ENCODE measurements at regions of chr19 and their contacts with region 1.

Region 1: DNA sequence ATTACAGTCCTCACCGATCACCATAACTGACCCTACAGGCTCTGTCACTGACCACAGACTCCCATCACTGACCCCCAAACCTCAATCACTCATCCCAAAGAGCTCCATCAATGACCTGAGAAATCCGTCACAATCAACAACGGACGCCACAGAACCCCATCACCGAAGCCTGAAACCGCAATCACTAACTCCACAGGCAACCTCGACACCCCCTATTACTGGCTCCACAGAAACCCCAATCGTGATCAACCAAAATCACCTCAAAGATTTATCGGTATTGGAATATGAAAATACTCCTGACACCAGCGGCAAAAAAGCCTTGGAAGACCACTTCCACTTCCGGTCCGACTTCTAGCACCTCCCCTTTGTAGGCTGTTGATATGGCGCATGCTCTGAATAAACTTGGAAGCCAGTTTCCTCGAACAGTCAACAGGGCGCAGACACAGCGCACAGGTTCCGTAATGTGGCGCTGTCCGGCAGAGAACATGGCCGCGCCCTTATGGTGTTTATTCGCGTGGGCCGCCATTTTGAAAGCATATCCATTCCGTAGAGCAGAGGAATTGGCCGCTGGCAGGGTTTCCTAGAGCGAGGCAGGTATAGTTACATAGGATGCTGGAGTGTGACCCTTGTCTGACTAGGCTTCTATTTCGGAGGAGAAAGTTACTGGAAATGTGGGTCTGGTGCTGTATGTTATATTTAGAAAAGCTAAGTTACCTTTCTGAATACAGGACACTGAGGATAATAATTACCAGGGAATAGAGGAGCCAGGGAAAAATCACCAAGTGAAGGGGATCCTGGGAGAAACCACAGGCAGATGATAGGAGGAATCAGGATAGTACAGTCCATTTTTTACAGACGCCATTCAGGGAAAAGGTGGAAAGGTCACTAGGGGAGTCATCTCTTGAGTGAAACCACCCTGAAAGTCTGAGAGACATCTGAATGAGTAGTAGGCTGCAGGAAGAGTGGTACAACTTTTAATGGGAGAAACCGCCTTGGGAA is at the start of gene ZNF585A:
- DNase-seq: peak; percentile 68 to 92 (median 88)
- ATAC-seq: peak; percentile 100
- H3K4me3 ChIP-seq: peak within 1 kb of the TSS; percentile 90
- H3K4me3 Mint-ChIP-seq: peak within 1 kb of the TSS in 3 of 10 donors; percentile 36 to 73 (median 39)
- H3K27ac ChIP-seq: peak within 1 kb of the TSS; percentile 84
- H3K27ac Mint-ChIP-seq: no peak within 1 kb of the TSS
- H3K4me1 ChIP-seq: no peaks in the 10 kb centered on the region
- H3K4me1 Mint-ChIP-seq: peaks cover 0 to 16% (median 4%) of the 10 kb centered on the region in 7 donors
- H3K27me3 ChIP-seq: no peaks in the 10 kb centered on the region
- H3K27me3 Mint-ChIP-seq: no peaks in the 10 kb centered on the region
- total RNA-seq, gene ZNF585A: 3.5 to 24.3 (median 7.2) TPM

Region 2: GRCh38 chr19:36489118-36489919 is 683.3 kb before region 1 on chr19 and contains the start of gene ZNF566:
- CTCF ChIA-PET with region 1: no interaction called
- POLR2A ChIA-PET with region 1: no interaction called
- intact Hi-C with region 1: loop called in 1 of 2 experiments (anchors 1 kb)
- DNase-seq: peak; percentile 74 to 98 (median 94)
- ATAC-seq: peak; percentile 95
- H3K4me3 ChIP-seq: peak within 1 kb of the TSS; percentile 97
- H3K4me3 Mint-ChIP-seq: peak within 1 kb of the TSS; percentile 93 to 99 (median 98)
- H3K27ac ChIP-seq: peak within 1 kb of the TSS; percentile 90
- H3K27ac Mint-ChIP-seq: peak within 1 kb of the TSS; percentile 93 to 99 (median 98)
- H3K4me1 ChIP-seq: peaks cover 9 to 10% of the 10 kb centered on the region in 2 donors
- H3K4me1 Mint-ChIP-seq: peaks cover 22 to 43% (median 30%) of the 10 kb centered on the region in 7 donors
- H3K27me3 ChIP-seq: no peaks in the 10 kb centered on the region
- H3K27me3 Mint-ChIP-seq: no peaks in the 10 kb centered on the region
- total RNA-seq, gene ZNF566: 9.2 to 29.8 (median 9.3) TPM

Region 3: DNA sequence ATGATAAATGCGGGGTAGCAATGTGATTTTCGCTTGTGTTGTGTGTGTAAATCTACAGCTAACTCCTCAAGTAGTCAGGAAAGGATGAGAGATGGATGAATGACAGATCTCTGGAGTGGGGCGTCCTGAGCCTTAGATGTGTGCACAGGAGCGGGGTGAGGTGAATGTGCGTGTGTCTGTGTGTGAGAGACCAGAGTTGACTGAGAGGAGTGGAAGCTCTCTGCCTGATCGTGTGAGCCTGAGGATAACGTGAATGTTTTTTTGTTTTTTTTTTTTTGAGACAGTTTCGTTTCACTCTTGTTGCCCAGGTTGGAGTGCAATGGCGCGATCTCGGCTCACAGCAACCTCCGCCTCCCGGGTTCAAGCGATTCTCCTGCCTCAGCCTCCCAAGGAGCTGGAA is 506.8 kb before region 1 on chr19:
- CTCF ChIA-PET with region 1: no interaction called
- POLR2A ChIA-PET with region 1: no interaction called
- intact Hi-C with region 1: loop called in 1 of 2 experiments (anchors 5 kb)
- DNase-seq: peak in 1 of 9 donors; percentile 2
- ATAC-seq: no peak
- H3K4me3 ChIP-seq: peak overlapping the region; percentile 88
- H3K4me3 Mint-ChIP-seq: peak overlapping the region; percentile 91 to 100 (median 98)
- H3K27ac ChIP-seq: no peak overlapping the region
- H3K27ac Mint-ChIP-seq: peak overlapping the region; percentile 29 to 99 (median 93)
- H3K4me1 ChIP-seq: peaks cover 0 to 10% of the 10 kb centered on the region in 2 donors
- H3K4me1 Mint-ChIP-seq: peaks cover 17 to 42% (median 35%) of the 10 kb centered on the region in 7 donors
- H3K27me3 ChIP-seq: no peaks in the 10 kb centered on the region
- H3K27me3 Mint-ChIP-seq: no peaks in the 10 kb centered on the region

Region 4: DNA sequence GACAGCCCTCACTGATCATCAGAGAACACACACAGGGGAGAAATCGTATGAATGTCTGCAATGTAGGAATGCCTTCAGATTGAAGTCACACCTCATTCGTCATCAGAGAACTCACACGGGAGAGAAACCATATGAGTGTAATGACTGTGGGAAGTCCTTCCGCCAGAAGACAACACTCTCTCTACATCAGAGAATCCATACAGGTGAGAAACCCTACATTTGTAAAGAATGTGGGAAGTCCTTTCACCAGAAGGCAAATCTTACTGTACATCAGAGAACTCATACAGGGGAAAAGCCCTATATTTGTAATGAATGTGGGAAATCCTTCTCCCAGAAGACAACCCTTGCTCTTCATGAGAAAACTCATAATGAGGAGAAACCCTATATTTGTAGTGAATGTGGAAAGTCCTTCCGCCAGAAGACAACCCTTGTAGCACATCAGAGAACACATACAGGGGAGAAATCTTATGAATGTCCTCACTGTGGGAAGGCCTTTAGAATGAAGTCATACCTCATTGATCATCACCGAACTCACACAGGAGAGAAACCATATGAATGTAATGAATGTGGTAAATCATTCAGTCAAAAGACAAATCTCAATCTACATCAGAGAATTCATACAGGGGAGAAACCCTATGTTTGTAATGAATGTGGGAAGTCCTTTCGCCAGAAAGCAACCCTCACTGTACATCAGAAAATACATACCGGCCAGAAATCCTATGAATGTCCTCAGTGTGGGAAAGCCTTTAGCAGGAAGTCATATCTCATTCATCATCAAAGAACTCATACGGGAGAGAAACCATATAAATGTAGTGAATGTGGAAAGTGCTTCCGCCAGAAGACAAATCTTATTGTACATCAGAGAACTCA is 452.7 kb before region 1 on chr19:
- CTCF ChIA-PET with region 1: no interaction called
- POLR2A ChIA-PET with region 1: no interaction called
- intact Hi-C with region 1: no loop called
- DNase-seq: peak in 1 of 9 donors; percentile 3
- ATAC-seq: no peak
- H3K4me3 ChIP-seq: peak overlapping the region; percentile 11
- H3K4me3 Mint-ChIP-seq: peak overlapping the region in 2 of 10 donors; percentile 4 to 11
- H3K27ac ChIP-seq: no peak overlapping the region
- H3K27ac Mint-ChIP-seq: peak overlapping the region in 1 of 9 donors; percentile 32
- H3K4me1 ChIP-seq: no peaks in the 10 kb centered on the region
- H3K4me1 Mint-ChIP-seq: no peaks in the 10 kb centered on the region
- H3K27me3 ChIP-seq: no peaks in the 10 kb centered on the region
- H3K27me3 Mint-ChIP-seq: no peaks in the 10 kb centered on the region

Region 5: DNA sequence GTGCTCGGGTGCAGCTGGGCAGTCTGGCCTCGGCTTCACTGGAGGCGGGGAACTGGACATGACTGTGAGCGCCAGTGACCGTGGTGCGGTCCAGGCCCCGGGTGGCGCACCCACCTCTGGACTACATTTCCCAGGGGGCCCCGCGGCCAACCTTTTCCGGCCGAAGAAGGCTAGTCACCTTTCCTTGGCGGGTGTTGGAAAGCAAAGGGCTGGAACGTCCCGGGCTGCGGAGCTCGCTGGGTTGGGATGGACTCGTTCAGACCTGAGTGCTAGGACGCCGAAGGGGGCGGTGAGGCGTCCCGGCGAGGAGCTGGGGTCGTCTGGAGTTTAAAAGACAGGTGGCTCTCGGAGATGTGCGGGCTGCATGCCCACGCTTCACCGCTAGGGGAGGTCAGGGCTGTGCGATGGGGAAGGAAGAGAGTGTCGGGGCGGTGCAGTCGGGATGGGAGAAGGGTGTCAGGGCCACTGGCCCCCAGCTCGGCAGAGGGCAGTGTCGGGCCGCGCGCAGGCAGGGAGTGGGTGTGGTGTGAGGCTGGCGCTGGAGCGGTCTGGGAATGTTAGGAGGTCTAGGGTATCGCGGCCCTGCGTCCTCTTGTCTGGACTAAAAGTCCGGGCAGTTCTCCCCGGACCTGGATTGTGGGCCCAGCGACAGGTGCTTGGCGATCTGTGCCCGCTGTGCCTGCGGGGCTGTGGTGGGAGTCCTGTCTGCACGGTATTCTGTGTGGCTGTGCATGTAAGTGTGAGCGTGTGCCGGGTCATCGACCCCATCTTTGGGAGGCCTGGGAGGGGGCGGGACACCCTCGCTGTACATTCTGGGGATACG is 199.4 kb before region 1 on chr19:
- CTCF ChIA-PET with region 1: no interaction called
- POLR2A ChIA-PET with region 1: no interaction called
- intact Hi-C with region 1: loop called (anchors 1 kb)
- DNase-seq: peak; percentile 56 to 84 (median 73)
- ATAC-seq: peak; percentile 96
- H3K4me3 ChIP-seq: peak overlapping the region; percentile 100
- H3K4me3 Mint-ChIP-seq: peak overlapping the region; percentile 92 to 99 (median 97)
- H3K27ac ChIP-seq: peak overlapping the region; percentile 75
- H3K27ac Mint-ChIP-seq: peak overlapping the region; percentile 83 to 97 (median 92)
- H3K4me1 ChIP-seq: peaks cover 5 to 15% of the 10 kb centered on the region in 2 donors
- H3K4me1 Mint-ChIP-seq: peaks cover 9 to 22% (median 13%) of the 10 kb centered on the region in 7 donors
- H3K27me3 ChIP-seq: no peaks in the 10 kb centered on the region
- H3K27me3 Mint-ChIP-seq: no peaks in the 10 kb centered on the region

Region 6: DNA sequence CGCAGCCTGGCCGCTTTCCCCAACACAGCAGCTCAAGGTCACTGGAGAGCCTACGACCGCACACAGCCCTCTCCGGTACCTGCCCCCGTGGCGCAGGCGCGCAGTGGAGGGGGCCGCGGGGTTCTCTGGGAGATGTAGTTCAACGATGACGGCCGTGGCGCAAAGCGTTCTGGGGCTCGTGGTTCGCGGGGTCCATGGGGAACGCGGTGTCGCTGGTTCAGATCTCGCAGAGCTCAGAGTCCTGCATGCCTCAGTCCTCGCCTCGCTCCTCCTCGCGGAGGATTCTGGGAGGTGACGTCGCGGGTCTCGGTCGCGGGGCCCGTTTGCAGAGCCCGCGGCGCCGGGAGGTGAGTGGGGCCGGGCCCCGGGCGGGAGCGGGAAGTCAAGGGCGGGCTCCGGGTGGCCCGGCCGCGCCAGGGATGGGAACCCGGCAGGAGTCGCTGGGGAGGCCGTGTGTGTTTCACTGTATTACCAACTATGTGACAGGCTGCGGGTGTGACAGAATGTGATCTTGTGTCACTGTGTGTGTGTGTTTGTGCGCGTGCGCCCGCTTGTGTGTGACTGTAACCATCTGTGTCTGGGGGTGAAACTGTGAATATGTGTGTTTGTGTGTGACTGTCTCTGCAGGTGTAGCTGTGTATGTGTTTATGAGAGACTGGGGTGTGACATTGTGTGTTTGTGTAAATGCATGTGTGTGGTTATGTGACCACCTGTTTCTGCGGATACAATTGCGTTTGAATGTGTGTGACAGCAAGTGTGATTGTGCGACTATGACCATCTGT is 198.4 kb after region 1 on chr19 and contains the start of gene ZNF527:
- CTCF ChIA-PET with region 1: no interaction called
- POLR2A ChIA-PET with region 1: no interaction called
- intact Hi-C with region 1: loop called in 1 of 2 experiments (anchors 1 kb)
- DNase-seq: peak; percentile 92 to 97 (median 96)
- ATAC-seq: peak; percentile 96
- H3K4me3 ChIP-seq: peak within 1 kb of the TSS; percentile 85
- H3K4me3 Mint-ChIP-seq: peak within 1 kb of the TSS; percentile 92 to 100 (median 98)
- H3K27ac ChIP-seq: peak within 1 kb of the TSS; percentile 74
- H3K27ac Mint-ChIP-seq: peak within 1 kb of the TSS; percentile 87 to 99 (median 97)
- H3K4me1 ChIP-seq: peaks cover 0 to 8% of the 10 kb centered on the region in 2 donors
- H3K4me1 Mint-ChIP-seq: peaks cover 7 to 25% (median 17%) of the 10 kb centered on the region in 7 donors
- H3K27me3 ChIP-seq: no peaks in the 10 kb centered on the region
- H3K27me3 Mint-ChIP-seq: no peaks in the 10 kb centered on the region
- total RNA-seq, gene ZNF527: 5.6 to 13.6 (median 13.2) TPM

Region 7: DNA sequence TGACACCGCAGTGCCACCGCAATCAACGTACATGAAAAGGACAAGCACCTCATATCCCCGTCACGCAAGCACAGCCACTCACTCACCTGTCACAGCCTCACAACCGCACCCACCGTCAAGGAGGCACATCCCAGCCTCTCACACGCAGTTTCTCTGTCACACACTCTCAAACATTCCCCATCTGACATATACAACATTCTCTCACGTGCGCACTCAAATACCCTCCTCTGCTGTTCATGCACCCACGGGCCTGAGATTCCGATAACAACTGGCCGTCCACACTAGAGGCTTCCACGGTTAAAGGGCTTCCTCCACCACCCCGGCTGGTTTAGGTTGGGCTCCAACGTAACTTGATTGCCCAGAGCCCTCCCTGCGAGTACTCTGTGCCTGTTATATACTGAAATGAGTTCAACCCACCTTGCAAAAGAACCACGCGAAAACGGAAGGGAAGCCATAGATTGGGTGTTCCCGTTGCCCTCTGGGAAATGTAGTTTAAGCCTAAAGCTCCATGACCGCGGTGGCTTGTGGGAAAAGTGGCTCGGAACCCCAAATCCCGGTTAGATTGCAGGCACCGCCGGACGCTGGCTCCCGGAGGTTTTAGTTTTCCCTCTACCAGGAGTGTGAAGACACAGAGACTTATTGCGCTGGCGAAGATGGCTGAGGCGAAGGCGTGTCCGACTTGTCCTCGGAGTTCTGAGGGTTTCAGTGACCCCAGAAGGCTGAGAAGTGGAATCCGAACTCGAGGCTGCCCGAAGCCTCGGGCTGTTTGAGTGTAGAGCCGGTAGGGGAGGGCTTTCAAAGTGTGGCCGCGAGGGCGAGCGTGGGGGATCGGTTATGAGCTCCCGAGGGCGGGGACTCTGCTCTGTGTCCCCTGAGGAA is 606.7 kb after region 1 on chr19 and contains the start of gene ZNF573:
- CTCF ChIA-PET with region 1: no interaction called
- POLR2A ChIA-PET with region 1: no interaction called
- intact Hi-C with region 1: loop called in 1 of 2 experiments (anchors 1 kb)
- DNase-seq: peak; percentile 62 to 99 (median 94)
- ATAC-seq: peak; percentile 94
- H3K4me3 ChIP-seq: peak within 1 kb of the TSS; percentile 82
- H3K4me3 Mint-ChIP-seq: peak within 1 kb of the TSS; percentile 91 to 98 (median 96)
- H3K27ac ChIP-seq: peak within 1 kb of the TSS; percentile 99
- H3K27ac Mint-ChIP-seq: peak within 1 kb of the TSS; percentile 89 to 100 (median 98)
- H3K4me1 ChIP-seq: peaks cover 6% of the 10 kb centered on the region in 2 donors
- H3K4me1 Mint-ChIP-seq: peaks cover 9 to 53% (median 48%) of the 10 kb centered on the region in 7 donors
- H3K27me3 ChIP-seq: no peaks in the 10 kb centered on the region
- H3K27me3 Mint-ChIP-seq: no peaks in the 10 kb centered on the region
- total RNA-seq, gene ZNF573: 5.9 to 43.8 (median 16.6) TPM

Measured in naive thymus-derived CD4-positive, alpha-beta T cell (primary cell).